SK-N-SH (cell line): ENCODE measurements at regions of chr12 and their contacts with region 1.

Region 1: GRCh38 chr12:41190338-41190737 is 2.2 kb downstream of the PDZRN4 start:
- DNase-seq: peak; percentile 57
- H3K4me3 ChIP-seq: no peak overlapping the region
- H3K27ac ChIP-seq: no peak overlapping the region
- H3K4me1 ChIP-seq: peaks cover 0 to 12% of the 10 kb centered on the region in 2 experiments; a peak in 2 of 4 replicates
- H3K27me3 ChIP-seq: peaks cover 27% of the 10 kb centered on the region; the same call in 1 of the 2 replicates
- CTCF ChIP-seq: peak; percentile 43
- EP300 ChIP-seq: no peak
- RAD21 ChIP-seq: peak; percentile 79

Region 2: DNA sequence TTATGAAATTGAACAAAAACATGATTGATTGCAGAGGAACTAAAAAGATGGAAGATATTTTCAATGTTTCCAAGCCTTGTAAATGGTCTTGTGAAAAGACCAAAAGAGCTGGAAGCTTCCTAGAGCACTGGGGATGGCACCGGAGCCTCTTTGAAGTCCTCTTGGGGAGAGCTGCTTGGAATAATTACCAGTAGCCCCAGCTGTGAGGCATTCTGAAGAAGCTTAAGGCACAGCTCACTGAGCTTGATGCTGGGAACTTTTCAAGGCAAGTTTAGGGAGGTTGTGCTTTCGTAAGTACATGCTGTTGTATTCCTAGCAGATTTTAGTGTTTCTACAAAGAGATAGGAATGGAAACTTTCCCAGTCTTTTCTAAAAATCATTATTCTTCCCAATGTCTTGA is 11.7 kb after region 1 on chr12:
- CTCF ChIA-PET with region 1: interaction called, 24 read pairs
- POLR2A ChIA-PET with region 1: no interaction called
- DNase-seq: no peak
- H3K4me3 ChIP-seq: no peak overlapping the region
- H3K27ac ChIP-seq: no peak overlapping the region
- H3K4me1 ChIP-seq: no peaks in the 10 kb centered on the region; a peak in 1 of 4 replicates
- H3K27me3 ChIP-seq: no peaks in the 10 kb centered on the region
- CTCF ChIP-seq: no peak
- EP300 ChIP-seq: no peak
- RAD21 ChIP-seq: no peak

Region 3: DNA sequence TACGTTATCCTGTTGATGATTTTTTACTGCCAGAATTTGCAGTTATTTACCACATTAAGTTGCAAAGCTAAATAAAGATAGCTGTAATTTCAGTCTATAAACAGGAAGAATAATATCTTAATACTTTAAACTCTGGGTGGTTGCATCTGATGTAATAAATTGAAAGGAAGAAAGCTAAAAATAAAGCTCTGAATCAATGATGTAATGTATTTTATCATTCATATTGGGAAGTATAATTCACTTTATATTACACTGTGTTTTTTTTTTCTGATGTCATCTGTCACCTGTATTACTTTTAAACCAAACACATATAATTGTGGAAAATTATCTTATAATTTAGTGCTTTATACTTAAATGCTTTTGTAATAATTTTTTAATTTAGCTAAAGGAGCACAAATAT is 34.8 kb after region 1 on chr12:
- CTCF ChIA-PET with region 1: interaction called, 12 read pairs
- POLR2A ChIA-PET with region 1: no interaction called
- DNase-seq: no peak
- H3K4me3 ChIP-seq: no peak overlapping the region
- H3K27ac ChIP-seq: no peak overlapping the region
- H3K4me1 ChIP-seq: no peaks in the 10 kb centered on the region
- H3K27me3 ChIP-seq: no peaks in the 10 kb centered on the region
- CTCF ChIP-seq: no peak
- EP300 ChIP-seq: no peak
- RAD21 ChIP-seq: no peak

Region 4: GRCh38 chr12:41264281-41264680 is 73.9 kb after region 1 on chr12:
- CTCF ChIA-PET with region 1: interaction called, 13 read pairs
- POLR2A ChIA-PET with region 1: no interaction called
- DNase-seq: peak; percentile 36
- H3K4me3 ChIP-seq: no peak overlapping the region
- H3K27ac ChIP-seq: no peak overlapping the region
- H3K4me1 ChIP-seq: no peaks in the 10 kb centered on the region; a peak in 1 of 4 replicates
- H3K27me3 ChIP-seq: no peaks in the 10 kb centered on the region
- CTCF ChIP-seq: peak; percentile 59
- EP300 ChIP-seq: no peak
- RAD21 ChIP-seq: peak; percentile 77